ENCODE measurements at regions of chr6 and their contacts with region 1.

Region 1: DNA sequence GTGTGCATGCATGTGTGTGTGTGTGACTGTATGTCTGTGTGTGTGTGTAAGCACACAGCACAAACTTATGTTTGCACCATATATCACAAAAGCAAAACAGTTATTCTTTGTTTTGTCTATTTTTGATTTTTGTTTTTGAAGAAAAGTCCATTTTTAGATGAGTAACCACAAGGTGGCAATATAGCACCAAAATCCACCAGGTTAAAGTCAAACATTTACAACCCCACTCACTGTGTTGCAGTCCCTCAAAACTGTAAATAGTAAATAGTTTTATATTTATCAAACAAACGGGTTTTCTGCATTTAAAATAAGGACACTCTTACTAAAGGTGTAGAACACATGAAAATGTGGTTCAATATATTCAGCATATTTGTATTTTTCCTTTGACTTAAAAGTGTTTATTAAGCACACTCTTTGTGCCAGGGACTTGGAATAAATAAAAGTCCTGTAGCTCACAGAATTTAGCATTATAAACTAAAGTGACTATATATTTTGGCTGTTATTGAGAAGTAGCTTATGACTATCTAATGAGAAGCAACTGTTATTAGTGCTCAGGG is 118.5 kb downstream of the GFRAL start:
- DNase-seq: peak; percentile 58
- ATAC-seq: no peak
- H3K4me3 ChIP-seq: no peak overlapping the region
- H3K27ac ChIP-seq: no peak overlapping the region
- H3K4me1 ChIP-seq: no peaks in the 10 kb centered on the region
- H3K27me3 ChIP-seq: peaks cover 9% of the 10 kb centered on the region
- CTCF ChIP-seq: peak; percentile 80

Region 2: DNA sequence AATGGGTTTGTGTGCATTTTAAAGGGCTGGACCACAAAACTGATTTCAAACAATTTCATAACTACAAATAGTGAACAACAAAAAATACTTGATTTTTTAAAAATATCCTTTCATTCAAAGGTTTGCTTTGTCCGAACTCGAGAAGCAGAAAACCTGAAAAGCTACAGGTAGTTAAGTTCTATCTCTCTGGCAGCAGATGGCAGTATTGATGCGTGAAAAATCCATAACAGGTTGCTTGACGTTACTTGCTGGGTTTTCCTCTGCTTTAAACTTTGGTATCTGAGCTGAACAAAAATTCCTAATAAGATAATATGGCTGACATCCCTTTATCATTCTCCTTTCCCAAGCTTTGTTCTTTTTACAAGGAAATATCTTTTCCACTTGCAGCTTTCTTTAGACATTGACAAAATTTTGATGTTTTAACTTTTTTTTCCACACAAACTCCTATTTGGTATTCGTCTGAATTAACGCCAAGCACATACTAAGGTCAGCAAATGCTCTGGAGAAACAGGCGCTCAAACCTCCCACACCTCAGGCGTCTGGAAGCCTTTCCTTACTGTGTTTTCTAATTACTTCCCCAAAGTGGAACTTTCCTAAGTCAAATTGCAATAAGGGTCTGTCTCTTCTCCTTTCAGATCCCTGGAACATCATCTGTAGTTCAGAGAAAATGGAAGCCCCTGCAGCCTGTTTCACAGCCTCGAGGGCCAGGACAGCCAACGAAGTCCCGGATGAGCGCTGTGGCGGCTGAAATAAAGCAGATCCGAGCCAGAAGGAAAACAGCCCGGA is 168.8 kb before region 1 on chr6:
- CTCF ChIA-PET with region 1: interaction called, 3 read pairs
- POLR2A ChIA-PET with region 1: no interaction called
- intact Hi-C with region 1: loop called (anchors 5 kb)
- DNase-seq: peak; percentile 73
- ATAC-seq: peak; percentile 46; the same call in 1 of the 2 replicates
- H3K4me3 ChIP-seq: no peak overlapping the region
- H3K27ac ChIP-seq: no peak overlapping the region
- H3K4me1 ChIP-seq: no peaks in the 10 kb centered on the region
- H3K27me3 ChIP-seq: peaks cover 58% of the 10 kb centered on the region
- CTCF ChIP-seq: peak; percentile 79

Region 3: DNA sequence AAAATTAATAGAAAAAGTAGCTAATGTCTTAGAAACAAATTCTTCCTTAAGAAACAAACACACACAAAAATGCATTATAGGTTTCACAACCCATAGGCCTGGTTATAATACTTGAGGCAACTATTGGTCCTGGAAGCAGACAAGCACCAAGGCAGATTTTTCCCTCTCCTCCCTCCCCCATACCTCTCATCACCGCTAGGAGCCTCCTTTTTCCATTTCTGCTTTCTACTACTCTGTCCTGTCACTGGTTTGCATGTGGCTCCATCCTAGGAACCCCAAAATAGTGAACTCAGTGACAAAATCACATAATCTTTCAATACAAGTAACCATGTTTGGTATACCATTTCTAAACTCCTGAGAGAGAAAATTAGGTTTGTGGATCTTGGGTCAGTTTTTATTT is 67.2 kb after region 1 on chr6:
- CTCF ChIA-PET with region 1: no interaction called
- POLR2A ChIA-PET with region 1: no interaction called
- intact Hi-C with region 1: no loop called
- DNase-seq: peak; percentile 10
- ATAC-seq: no peak
- H3K4me3 ChIP-seq: no peak overlapping the region
- H3K27ac ChIP-seq: no peak overlapping the region
- H3K4me1 ChIP-seq: no peaks in the 10 kb centered on the region
- H3K27me3 ChIP-seq: no peaks in the 10 kb centered on the region
- CTCF ChIP-seq: peak; percentile 52

Region 4: GRCh38 chr6:55528621-55529020 is 82.9 kb after region 1 on chr6:
- CTCF ChIA-PET with region 1: no interaction called
- POLR2A ChIA-PET with region 1: no interaction called
- intact Hi-C with region 1: loop called (anchors 5 kb)
- DNase-seq: peak; percentile 71
- ATAC-seq: peak; percentile 80
- H3K4me3 ChIP-seq: no peak overlapping the region
- H3K27ac ChIP-seq: no peak overlapping the region
- H3K4me1 ChIP-seq: no peaks in the 10 kb centered on the region
- H3K27me3 ChIP-seq: no peaks in the 10 kb centered on the region
- CTCF ChIP-seq: peak; percentile 73

Region 5: DNA sequence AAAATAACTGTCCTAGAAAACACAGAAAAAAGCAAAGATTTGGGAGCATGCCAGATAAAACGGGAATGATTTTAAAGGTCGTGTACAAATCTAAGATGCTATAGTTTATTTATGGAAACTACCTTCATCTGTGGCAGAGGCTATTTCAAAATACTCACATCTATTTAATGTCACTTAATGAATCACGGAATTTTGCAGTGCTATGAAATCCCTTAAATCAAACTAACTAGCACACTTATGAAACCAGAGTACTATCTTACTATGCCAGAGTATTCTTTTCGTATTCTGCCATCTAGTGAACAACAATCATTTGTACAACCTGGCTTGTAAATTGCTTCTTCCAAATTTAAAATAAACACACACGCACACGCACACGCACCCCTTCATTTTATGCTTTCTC is 507.6 kb after region 1 on chr6:
- CTCF ChIA-PET with region 1: no interaction called
- POLR2A ChIA-PET with region 1: no interaction called
- intact Hi-C with region 1: loop called (anchors 1 kb)
- DNase-seq: peak; percentile 76
- ATAC-seq: peak; percentile 92
- H3K4me3 ChIP-seq: peak overlapping the region; percentile 36; the same call in 1 of the 2 replicates
- H3K27ac ChIP-seq: no peak overlapping the region
- H3K4me1 ChIP-seq: no peaks in the 10 kb centered on the region
- H3K27me3 ChIP-seq: no peaks in the 10 kb centered on the region
- CTCF ChIP-seq: peak; percentile 80